CD8-positive, alpha-beta T cell (primary cell): ENCODE measurements at regions of chr12 and their contacts with region 1.

Region 1: GRCh38 chr12:106223485-106224354 is 24.1 kb downstream of the CKAP4 start:
- DNase-seq: peak; percentile 49 to 82 (median 71)
- ATAC-seq: peak; percentile 63
- H3K4me3 ChIP-seq: no peak overlapping the region
- H3K4me3 Mint-ChIP-seq: no peak overlapping the region
- H3K27ac ChIP-seq: no peak overlapping the region
- H3K27ac Mint-ChIP-seq: no peak overlapping the region
- H3K4me1 ChIP-seq: peaks cover 18% of the 10 kb centered on the region
- H3K4me1 Mint-ChIP-seq: peaks cover 18% of the 10 kb centered on the region
- H3K27me3 ChIP-seq: no peaks in the 10 kb centered on the region
- H3K27me3 Mint-ChIP-seq: peaks cover 6% of the 10 kb centered on the region
- CTCF ChIP-seq: peak; percentile 90

Region 2: GRCh38 chr12:105420659-105421240 is 803.0 kb before region 1 on chr12:
- CTCF ChIA-PET with region 1: interaction called, 5 read pairs
- POLR2A ChIA-PET with region 1: no interaction called
- intact Hi-C with region 1: loop called (anchors 1 to 5 kb)
- DNase-seq: peak; percentile 12 to 74 (median 55)
- ATAC-seq: peak; percentile 46
- H3K4me3 ChIP-seq: no peak overlapping the region
- H3K4me3 Mint-ChIP-seq: no peak overlapping the region
- H3K27ac ChIP-seq: no peak overlapping the region
- H3K27ac Mint-ChIP-seq: no peak overlapping the region
- H3K4me1 ChIP-seq: no peaks in the 10 kb centered on the region
- H3K4me1 Mint-ChIP-seq: no peaks in the 10 kb centered on the region
- H3K27me3 ChIP-seq: no peaks in the 10 kb centered on the region
- H3K27me3 Mint-ChIP-seq: no peaks in the 10 kb centered on the region
- CTCF ChIP-seq: peak; percentile 91

Region 3: GRCh38 chr12:106239241-106239950 is 15.7 kb after region 1 on chr12:
- CTCF ChIA-PET with region 1: interaction called, 26 read pairs
- POLR2A ChIA-PET with region 1: interaction called, 4 read pairs
- intact Hi-C with region 1: no loop called
- DNase-seq: peak in 1 of 9 experiments; percentile 45
- ATAC-seq: no peak
- H3K4me3 ChIP-seq: no peak overlapping the region
- H3K4me3 Mint-ChIP-seq: no peak overlapping the region
- H3K27ac ChIP-seq: no peak overlapping the region
- H3K27ac Mint-ChIP-seq: no peak overlapping the region
- H3K4me1 ChIP-seq: no peaks in the 10 kb centered on the region
- H3K4me1 Mint-ChIP-seq: peaks cover 8% of the 10 kb centered on the region
- H3K27me3 ChIP-seq: no peaks in the 10 kb centered on the region
- H3K27me3 Mint-ChIP-seq: no peaks in the 10 kb centered on the region
- CTCF ChIP-seq: no peak

Region 4: DNA sequence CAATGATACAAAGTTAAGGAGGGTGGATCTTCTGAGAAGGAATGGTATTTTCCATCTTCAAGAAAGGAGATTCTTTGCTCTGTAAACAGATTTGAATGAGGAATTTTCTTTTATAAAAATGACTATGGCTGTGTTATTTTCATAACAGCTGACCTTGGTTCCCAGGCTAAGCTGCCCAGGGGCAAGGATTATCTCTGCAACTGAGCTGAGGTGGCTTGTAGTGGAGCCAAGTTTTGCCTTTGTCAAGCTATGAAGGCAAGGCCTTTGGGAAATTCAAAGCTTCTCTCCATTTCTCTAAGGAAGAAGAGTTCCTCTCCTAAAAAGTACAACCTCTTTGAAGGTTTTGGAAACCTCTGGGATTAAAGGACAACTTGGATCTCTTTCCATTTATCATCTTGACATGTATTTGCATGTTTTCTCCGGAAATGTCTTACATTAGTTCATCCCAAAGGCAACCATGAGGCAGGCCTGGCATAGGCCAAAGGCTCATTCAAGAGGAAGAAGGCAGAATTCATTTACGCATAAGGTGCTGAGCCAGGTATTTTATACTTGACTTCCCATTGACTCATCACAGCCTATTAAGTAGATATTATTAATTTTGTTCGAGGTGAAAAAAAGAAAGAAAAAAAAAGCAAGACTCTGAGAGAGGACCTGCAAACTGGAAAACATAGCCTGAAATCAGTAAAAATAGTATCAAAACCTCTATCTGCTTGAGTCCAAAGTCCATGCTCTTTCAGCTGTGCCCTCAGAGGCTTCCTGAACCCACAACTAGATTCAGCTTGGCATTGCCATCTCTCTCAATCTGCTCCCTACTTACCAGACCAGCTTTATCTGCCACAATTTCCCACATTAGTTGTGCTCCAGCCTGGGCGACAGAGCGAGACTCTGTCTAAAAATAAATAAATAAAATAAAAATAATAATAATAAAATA is 48.1 kb after region 1 on chr12:
- CTCF ChIA-PET with region 1: interaction called, 11 read pairs
- POLR2A ChIA-PET with region 1: interaction called, 3 read pairs
- intact Hi-C with region 1: no loop called
- DNase-seq: no peak
- ATAC-seq: no peak
- H3K4me3 ChIP-seq: no peak overlapping the region
- H3K4me3 Mint-ChIP-seq: no peak overlapping the region
- H3K27ac ChIP-seq: no peak overlapping the region
- H3K27ac Mint-ChIP-seq: no peak overlapping the region
- H3K4me1 ChIP-seq: no peaks in the 10 kb centered on the region
- H3K4me1 Mint-ChIP-seq: peaks cover 2% of the 10 kb centered on the region
- H3K27me3 ChIP-seq: no peaks in the 10 kb centered on the region
- H3K27me3 Mint-ChIP-seq: no peaks in the 10 kb centered on the region
- CTCF ChIP-seq: no peak

Region 5: DNA sequence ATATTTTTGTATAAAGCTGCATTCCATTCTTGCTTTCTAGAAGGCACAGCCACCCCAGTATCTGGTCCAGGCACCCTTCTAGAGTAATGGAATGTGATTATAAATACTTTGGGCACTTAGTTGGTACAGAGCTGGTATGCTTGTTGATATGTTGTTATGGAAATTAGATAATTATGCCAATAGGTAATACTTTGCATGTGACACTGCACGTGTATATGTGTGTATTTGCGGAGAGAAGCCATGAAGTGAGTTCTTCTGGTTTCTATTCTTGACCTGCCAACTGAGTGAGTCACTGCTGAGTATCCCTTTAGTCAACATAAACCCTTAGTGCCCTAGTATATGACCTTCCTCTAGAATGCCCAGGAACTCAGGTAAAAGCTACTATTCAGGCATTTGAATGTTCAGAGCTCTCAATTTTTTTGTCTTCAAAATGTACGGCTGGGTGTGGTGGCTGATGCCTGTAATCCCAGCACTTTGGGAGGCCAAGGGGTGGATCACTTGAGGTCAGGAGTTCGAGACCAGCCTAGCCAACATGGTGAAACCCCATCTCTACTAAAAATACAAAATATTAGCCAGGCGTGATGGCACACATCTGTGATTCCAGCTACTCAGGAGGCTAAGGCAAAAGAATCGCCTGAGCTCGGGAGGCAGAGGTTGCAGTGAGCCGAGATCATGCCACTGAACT is 72.6 kb after region 1 on chr12:
- CTCF ChIA-PET with region 1: interaction called, 25 read pairs
- POLR2A ChIA-PET with region 1: interaction called, 22 read pairs
- intact Hi-C with region 1: loop called in 1 of 2 experiments (anchors 1 kb)
- DNase-seq: no peak
- ATAC-seq: no peak
- H3K4me3 ChIP-seq: no peak overlapping the region
- H3K4me3 Mint-ChIP-seq: no peak overlapping the region
- H3K27ac ChIP-seq: no peak overlapping the region
- H3K27ac Mint-ChIP-seq: no peak overlapping the region
- H3K4me1 ChIP-seq: peaks cover 11% of the 10 kb centered on the region
- H3K4me1 Mint-ChIP-seq: peaks cover 18% of the 10 kb centered on the region
- H3K27me3 ChIP-seq: no peaks in the 10 kb centered on the region
- H3K27me3 Mint-ChIP-seq: no peaks in the 10 kb centered on the region
- CTCF ChIP-seq: no peak

Region 6: GRCh38 chr12:106315519-106315918 is 91.8 kb after region 1 on chr12:
- CTCF ChIA-PET with region 1: interaction called, 19 read pairs
- POLR2A ChIA-PET with region 1: no interaction called
- intact Hi-C with region 1: no loop called
- DNase-seq: no peak
- ATAC-seq: no peak
- H3K4me3 ChIP-seq: no peak overlapping the region
- H3K4me3 Mint-ChIP-seq: no peak overlapping the region
- H3K27ac ChIP-seq: no peak overlapping the region
- H3K27ac Mint-ChIP-seq: no peak overlapping the region
- H3K4me1 ChIP-seq: no peaks in the 10 kb centered on the region
- H3K4me1 Mint-ChIP-seq: peaks cover 16% of the 10 kb centered on the region
- H3K27me3 ChIP-seq: no peaks in the 10 kb centered on the region
- H3K27me3 Mint-ChIP-seq: no peaks in the 10 kb centered on the region
- CTCF ChIP-seq: no peak

Region 7: GRCh38 chr12:106357549-106358395 is 134.1 kb after region 1 on chr12 and contains the start of gene POLR3B:
- CTCF ChIA-PET with region 1: interaction called, 17 read pairs
- POLR2A ChIA-PET with region 1: interaction called, 4 read pairs
- intact Hi-C with region 1: loop called (anchors 1 to 5 kb)
- DNase-seq: peak; percentile 93 to 98 (median 96)
- ATAC-seq: peak; percentile 92
- H3K4me3 ChIP-seq: peak within 1 kb of the TSS; percentile 97
- H3K4me3 Mint-ChIP-seq: peak within 1 kb of the TSS; percentile 91
- H3K27ac ChIP-seq: peak within 1 kb of the TSS; percentile 84 to 90
- H3K27ac Mint-ChIP-seq: peak within 1 kb of the TSS; percentile 90
- H3K4me1 ChIP-seq: peaks cover 13% of the 10 kb centered on the region
- H3K4me1 Mint-ChIP-seq: peaks cover 18% of the 10 kb centered on the region
- H3K27me3 ChIP-seq: no peaks in the 10 kb centered on the region
- H3K27me3 Mint-ChIP-seq: no peaks in the 10 kb centered on the region
- CTCF ChIP-seq: peak; percentile 79
- total RNA-seq, gene POLR3B: 2.5 to 2.6 TPM

Region 8: GRCh38 chr12:106632797-106633450 is 409.2 kb after region 1 on chr12:
- CTCF ChIA-PET with region 1: no interaction called
- POLR2A ChIA-PET with region 1: no interaction called
- intact Hi-C with region 1: no loop called
- DNase-seq: no peak
- ATAC-seq: no peak
- H3K4me3 ChIP-seq: no peak overlapping the region
- H3K4me3 Mint-ChIP-seq: no peak overlapping the region
- H3K27ac ChIP-seq: no peak overlapping the region
- H3K27ac Mint-ChIP-seq: no peak overlapping the region
- H3K4me1 ChIP-seq: no peaks in the 10 kb centered on the region
- H3K4me1 Mint-ChIP-seq: no peaks in the 10 kb centered on the region
- H3K27me3 ChIP-seq: no peaks in the 10 kb centered on the region
- H3K27me3 Mint-ChIP-seq: peaks cover 9% of the 10 kb centered on the region
- CTCF ChIP-seq: no peak